Posterior vena cava (tissue), 2 donors: ENCODE measurements at regions of chr5 and their contacts with region 1.

Region 1: DNA sequence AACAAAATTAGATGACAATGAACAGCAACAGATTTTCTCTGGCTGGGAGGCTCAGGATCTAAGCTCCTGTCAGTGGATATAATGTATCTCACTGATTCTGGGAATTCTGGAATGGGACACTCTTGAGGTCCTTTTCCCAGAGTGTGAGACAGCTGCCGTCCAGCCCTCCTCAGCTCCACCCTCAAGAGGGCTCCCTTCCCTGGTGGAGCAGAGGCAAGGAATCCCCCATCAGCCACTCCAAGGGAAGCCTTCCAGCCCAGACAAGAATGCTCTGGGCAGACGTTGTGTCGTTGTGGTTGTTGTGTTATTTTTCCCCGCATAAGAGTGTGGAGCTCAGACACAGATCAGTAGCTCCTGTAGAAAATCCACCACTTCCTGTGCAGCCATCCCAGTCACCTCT is 47.7 kb upstream of the ATP10B start:
- DNase-seq: no peak

Region 2: GRCh38 chr5:160887777-160888176 is 12.0 kb before region 1 on chr5:
- intact Hi-C with region 1: loop called in 1 of 2 experiments (anchors 1 kb)
- DNase-seq: no peak

Region 3: GRCh38 chr5:160978944-160979343 is 79.2 kb after region 1 on chr5:
- intact Hi-C with region 1: no loop called
- DNase-seq: no peak

Region 4: GRCh38 chr5:161201558-161201957 is 301.8 kb after region 1 on chr5:
- intact Hi-C with region 1: no loop called
- DNase-seq: no peak